Heart right ventricle (tissue), 16 donors: ENCODE measurements at regions of chr1 and their contacts with region 1.

Region 1: GRCh38 chr1:64038965-64039926 is 164.2 kb upstream of the UBE2U start:
- DNase-seq: peak in 1 of 2 donors; percentile 43
- ATAC-seq: peak; percentile 48 to 80 (median 59)
- H3K4me3 ChIP-seq: no peak overlapping the region
- H3K27ac ChIP-seq: peak overlapping the region in 8 of 10 donors; percentile 18 to 74 (median 58)
- H3K4me1 ChIP-seq: peaks cover 8 to 74% (median 38%) of the 10 kb centered on the region in 9 donors
- H3K27me3 ChIP-seq: no peaks in the 10 kb centered on the region
- CTCF ChIP-seq: no peak

Region 2: GRCh38 chr1:63305043-63305442 is 734.2 kb before region 1 on chr1:
- intact Hi-C with region 1: no loop called
- DNase-seq: no peak
- ATAC-seq: no peak
- H3K4me3 ChIP-seq: no peak overlapping the region
- H3K27ac ChIP-seq: no peak overlapping the region
- H3K4me1 ChIP-seq: no peaks in the 10 kb centered on the region
- H3K27me3 ChIP-seq: peaks cover 3 to 88% (median 70%) of the 10 kb centered on the region in 7 donors
- CTCF ChIP-seq: no peak

Region 3: DNA sequence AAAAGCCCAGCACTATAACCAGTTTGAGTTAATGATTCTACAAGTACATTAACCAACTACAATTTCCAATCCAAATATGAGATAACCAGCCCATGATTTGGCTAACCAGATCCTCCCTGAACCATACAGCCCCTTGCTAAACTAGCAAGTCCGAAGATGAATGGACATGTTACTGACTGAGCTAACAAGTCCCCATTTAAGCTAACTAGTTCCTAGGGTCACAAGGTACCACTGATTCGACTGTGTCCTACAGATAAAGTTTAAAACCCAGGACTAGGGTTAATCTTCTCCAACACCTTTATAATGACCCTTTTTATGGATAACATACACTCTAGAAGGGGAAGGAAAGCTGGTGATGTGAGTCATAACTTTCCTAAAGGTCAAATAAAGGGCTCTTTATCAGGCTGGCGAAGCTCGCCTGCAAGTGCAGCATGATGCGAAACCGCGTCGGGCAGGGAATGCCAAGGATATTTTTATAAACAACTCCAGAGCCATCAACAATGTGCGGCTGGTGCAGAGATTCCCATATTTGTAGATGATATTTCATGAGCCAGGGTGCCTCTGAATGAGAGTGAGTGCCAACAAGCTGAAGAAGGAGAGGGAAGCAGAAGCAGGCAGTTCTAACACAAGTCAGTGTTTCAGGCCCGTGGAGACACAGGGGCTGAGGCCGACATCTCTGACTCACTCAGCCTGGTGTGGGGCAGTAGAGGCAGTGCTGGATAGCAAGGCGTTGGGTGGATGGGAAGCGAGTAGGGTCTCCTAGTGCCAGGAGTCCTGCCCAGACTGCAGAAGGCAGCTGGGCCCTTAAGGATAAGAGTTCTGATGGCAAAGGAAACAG is 341.0 kb before region 1 on chr1:
- intact Hi-C with region 1: loop called in 4 of 10 experiments (anchors 5 to 10 kb)
- DNase-seq: peak; percentile 61 to 69
- ATAC-seq: peak; percentile 63 to 94 (median 89)
- H3K4me3 ChIP-seq: no peak overlapping the region
- H3K27ac ChIP-seq: peak overlapping the region; percentile 76 to 99 (median 93)
- H3K4me1 ChIP-seq: peaks cover 0 to 37% (median 16%) of the 10 kb centered on the region in 9 donors
- H3K27me3 ChIP-seq: no peaks in the 10 kb centered on the region
- CTCF ChIP-seq: no peak

Region 4: DNA sequence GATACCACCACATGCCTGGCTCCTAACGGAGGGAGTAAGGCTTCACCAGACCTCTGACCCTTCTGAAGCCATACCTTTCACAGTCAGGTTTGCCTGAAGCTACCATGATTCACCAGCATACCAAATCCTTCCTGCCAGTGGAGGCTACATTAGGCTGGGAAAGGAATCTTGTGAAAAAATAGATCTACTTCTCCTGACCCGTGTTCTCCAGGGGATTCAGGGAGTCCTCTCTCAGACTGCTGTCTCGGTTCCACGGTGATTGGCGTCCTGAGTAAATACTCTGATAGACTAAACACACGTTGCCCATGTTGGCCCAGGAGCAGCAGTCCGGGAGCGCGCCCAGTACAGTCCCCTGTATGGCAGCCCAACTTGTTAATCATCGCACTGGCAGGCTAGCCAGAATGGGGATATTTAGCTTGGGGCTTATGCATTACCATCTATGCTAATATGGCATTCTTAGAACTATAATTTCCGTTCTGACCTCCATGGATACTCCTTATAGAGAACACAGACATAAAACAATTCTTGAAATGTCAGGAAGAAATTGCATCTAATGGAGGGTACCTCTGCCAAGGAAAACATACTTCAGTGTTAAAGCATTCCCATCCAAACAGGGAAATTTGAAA is 92.3 kb before region 1 on chr1:
- intact Hi-C with region 1: loop called in 2 of 10 experiments (anchors 5 to 10 kb)
- DNase-seq: peak; percentile 43 to 47
- ATAC-seq: peak in 7 of 8 donors; percentile 65 to 90 (median 82)
- H3K4me3 ChIP-seq: no peak overlapping the region
- H3K27ac ChIP-seq: peak overlapping the region in 6 of 10 donors; percentile 1 to 65 (median 52)
- H3K4me1 ChIP-seq: peaks cover 6 to 82% (median 38%) of the 10 kb centered on the region in 9 donors
- H3K27me3 ChIP-seq: no peaks in the 10 kb centered on the region
- CTCF ChIP-seq: no peak

Region 5: DNA sequence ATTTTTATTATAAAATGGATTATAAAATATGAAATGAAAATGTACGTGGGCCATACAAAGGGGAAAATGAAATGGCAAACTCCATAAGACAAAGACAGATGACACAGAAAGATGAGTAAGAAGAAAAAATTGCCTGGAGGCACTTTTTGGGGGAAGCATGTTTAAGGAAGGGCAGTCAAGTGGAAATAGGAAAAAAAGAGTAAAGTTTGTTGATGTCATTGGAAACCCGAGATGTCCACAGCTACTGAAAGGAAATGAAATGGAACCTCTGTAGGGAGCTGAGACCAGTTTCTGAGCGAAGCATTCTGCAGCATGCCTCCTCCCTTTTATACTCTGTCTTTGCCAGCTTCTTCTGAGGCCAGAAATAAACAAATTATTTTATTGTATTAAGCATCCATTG is 39.2 kb before region 1 on chr1:
- intact Hi-C with region 1: no loop called
- DNase-seq: no peak
- ATAC-seq: no peak
- H3K4me3 ChIP-seq: no peak overlapping the region
- H3K27ac ChIP-seq: no peak overlapping the region
- H3K4me1 ChIP-seq: peaks cover 0 to 23% (median 0%) of the 10 kb centered on the region in 9 donors
- H3K27me3 ChIP-seq: no peaks in the 10 kb centered on the region
- CTCF ChIP-seq: no peak

Region 6: DNA sequence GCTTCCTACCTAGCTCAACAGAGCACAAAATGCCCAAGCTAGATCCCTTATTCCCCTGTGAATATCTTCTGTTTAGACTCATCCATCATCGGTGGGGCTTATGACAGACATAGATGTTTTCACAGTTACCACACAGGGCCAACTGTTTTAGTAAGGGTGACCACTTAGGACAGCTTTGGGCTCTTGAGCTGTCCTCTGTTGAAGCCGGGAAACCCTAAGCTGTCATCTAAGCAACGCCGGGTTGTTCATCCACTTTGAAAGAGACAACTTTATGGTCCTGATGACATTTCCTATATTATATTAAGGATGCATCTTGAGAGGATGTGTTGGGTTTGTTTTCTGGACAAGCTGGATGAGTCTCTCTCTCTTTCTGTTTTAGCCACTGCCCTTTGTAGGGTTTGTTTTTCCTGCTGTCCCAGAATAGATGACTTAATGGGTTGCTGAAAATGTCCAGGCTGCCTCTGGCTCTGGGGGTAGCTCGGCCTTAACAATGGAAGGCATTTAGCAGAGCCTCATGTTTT is 53.7 kb after region 1 on chr1:
- intact Hi-C with region 1: no loop called
- DNase-seq: no peak
- ATAC-seq: peak in 4 of 8 donors; percentile 33 to 63 (median 50)
- H3K4me3 ChIP-seq: no peak overlapping the region
- H3K27ac ChIP-seq: peak overlapping the region in 4 of 10 donors; percentile 3 to 49 (median 40)
- H3K4me1 ChIP-seq: peaks cover 0 to 22% (median 2%) of the 10 kb centered on the region in 9 donors
- H3K27me3 ChIP-seq: no peaks in the 10 kb centered on the region
- CTCF ChIP-seq: no peak

Region 7: DNA sequence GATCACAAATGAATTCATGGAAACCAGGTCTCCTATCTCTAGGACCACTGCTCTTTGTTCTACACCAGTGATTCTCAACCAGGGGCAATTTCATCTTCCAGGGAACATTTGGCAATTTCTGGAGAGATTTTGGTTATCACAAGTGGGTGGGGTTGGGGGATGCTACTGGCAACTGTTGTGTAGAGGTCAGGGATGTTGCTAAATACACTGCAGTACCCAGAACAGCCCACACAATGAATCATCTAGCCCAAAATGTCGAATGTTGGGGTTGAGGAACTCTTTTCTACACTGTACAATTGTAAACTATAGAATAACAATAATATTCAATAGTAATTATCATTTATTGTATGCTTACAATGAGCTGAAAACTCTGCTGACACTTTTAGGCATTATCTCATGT is 108.5 kb after region 1 on chr1:
- intact Hi-C with region 1: no loop called
- DNase-seq: no peak
- ATAC-seq: peak in 1 of 8 donors; percentile 33
- H3K4me3 ChIP-seq: no peak overlapping the region
- H3K27ac ChIP-seq: no peak overlapping the region
- H3K4me1 ChIP-seq: peaks cover 0 to 11% (median 0%) of the 10 kb centered on the region in 9 donors
- H3K27me3 ChIP-seq: no peaks in the 10 kb centered on the region
- CTCF ChIP-seq: no peak